ENCODE measurements at regions of chr16 and their contacts with region 1.

Region 1: DNA sequence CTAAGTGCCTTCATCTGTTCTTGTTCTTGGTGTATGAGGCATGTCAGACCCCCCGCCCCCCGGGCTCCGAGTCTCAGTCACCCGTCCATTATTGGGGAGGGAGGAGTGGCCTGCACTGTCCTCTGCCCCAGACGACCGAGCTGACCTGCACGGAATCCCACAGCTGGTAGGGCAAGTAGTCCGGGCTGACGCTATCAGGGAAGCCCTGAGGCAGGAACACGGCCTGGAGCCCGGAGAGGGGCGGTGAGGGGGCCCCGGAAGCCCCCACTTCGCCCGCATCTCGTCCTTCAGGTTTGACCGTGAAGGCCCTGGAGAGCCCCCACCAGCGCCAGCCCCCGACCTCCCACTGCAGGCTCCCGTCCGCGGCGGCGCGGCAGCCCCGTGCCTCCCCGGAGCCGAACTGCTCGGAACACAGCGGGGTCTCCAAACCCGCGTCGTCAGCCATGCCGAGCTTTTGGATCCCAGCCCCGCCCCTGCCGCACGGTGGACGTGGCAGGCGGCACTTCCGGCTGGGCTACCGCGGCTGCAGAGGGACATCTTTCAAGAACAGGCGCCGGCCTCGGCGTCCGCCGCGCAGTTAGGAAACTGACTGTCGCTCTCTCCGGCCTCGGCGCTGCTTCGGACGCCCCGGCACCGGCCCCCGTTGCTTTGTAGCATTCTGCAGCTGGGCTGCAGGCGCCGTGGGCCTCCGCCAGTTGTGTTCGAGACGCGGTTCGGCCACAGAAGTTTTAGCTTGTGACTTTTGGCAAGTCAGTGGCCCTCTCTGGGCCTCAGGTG is at the start of gene RUSF1:
- DNase-seq: peak; percentile 83
- H3K4me3 ChIP-seq: peak within 1 kb of the TSS; percentile 77
- H3K27ac ChIP-seq: peak within 1 kb of the TSS; percentile 21
- H3K4me1 ChIP-seq: peaks cover 25% of the 10 kb centered on the region
- CTCF ChIP-seq: no peak
- total RNA-seq, gene RUSF1: 24.0 and 28.6 TPM in 2 replicates

Region 2: DNA sequence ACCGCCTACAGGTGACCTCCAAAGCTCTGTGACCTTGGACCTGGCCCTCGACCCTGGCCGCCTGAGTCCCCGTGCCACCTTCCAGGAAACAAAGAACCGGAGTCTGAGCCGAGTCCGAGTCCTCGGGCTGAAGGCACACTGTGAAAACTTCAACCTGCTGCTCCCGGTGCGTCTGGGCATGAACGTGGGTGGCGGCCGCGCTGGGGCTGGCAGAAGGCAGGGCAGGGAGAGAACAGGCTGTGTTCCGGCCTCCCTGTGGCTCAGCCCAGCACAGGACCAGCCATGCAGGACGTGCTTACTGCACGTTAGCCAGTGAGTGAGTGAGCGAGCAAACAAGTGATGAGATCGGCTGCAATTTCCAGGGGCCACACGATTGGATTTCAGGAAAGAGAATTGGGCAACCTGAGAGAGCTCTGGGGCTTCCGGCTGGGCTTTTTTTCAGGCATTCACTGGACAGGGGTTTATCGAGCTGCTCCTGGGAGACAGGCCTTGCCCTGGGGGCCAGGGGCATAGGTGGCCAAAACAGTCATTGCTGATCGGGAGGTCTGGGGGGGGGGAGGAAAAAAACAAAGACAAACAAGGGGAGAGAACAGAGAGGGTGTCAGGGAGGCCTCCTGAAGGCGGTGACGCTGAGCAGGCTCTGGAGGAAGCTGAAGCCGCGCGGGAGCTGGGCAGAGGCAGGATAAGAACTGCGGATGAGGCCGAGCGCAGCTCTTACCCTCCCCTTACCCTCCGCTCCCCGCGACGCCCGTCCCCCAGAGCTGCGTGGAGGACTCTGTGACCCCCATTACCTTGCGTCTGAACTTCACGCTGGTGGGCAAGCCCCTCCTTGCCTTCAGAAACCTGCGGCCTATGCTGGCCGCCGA is 136.3 kb before region 1 on chr16:
- CTCF ChIA-PET with region 1: no interaction called
- POLR2A ChIA-PET with region 1: no interaction called
- intact Hi-C with region 1: no loop called
- DNase-seq: no peak
- H3K4me3 ChIP-seq: no peak overlapping the region
- H3K27ac ChIP-seq: no peak overlapping the region
- H3K4me1 ChIP-seq: no peaks in the 10 kb centered on the region
- CTCF ChIP-seq: no peak

Region 3: DNA sequence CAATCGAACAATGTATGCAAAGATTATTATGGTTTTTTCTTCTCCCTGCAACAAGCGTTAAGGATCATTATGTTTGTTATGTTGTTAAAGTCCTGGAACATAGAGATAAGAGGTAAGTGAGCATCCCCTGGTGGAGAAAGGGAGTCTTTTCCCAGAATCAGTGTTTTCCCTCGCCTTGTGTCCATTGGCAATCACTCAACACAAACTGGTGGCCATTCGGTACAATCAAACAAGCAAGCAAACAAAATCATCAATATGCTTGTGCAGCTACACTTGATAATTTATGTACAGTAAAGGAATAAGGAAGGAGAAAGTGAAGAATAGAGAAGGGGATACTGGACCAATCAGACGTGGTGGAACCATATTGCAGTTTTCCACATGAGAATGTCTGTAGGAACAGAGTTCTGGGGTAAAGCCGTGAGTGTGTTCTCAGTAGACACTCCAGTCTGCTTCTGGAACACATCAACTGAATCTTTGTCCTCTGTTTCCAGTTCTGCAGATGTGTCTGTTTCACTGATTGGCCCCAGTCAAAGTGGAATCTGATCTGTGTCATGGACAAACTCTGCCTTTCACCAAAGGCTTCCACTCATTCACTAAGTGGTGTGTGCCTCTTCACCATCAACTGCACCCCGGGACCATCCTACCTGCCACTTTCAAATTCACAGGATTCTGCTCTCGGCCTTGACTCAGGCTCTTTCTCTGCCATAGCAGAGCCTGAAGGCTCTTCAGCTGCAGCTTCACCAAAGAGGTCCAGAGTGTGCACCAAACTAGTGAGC is 189.0 kb after region 1 on chr16:
- CTCF ChIA-PET with region 1: no interaction called
- POLR2A ChIA-PET with region 1: no interaction called
- intact Hi-C with region 1: loop called (anchors 5 kb)
- DNase-seq: peak; percentile 27
- H3K4me3 ChIP-seq: no peak overlapping the region
- H3K27ac ChIP-seq: no peak overlapping the region
- H3K4me1 ChIP-seq: peaks cover 23% of the 10 kb centered on the region
- CTCF ChIP-seq: peak; percentile 78